Ovary (tissue), 10 donors: ENCODE measurements at regions of chr20 and their contacts with region 1.

Region 1: DNA sequence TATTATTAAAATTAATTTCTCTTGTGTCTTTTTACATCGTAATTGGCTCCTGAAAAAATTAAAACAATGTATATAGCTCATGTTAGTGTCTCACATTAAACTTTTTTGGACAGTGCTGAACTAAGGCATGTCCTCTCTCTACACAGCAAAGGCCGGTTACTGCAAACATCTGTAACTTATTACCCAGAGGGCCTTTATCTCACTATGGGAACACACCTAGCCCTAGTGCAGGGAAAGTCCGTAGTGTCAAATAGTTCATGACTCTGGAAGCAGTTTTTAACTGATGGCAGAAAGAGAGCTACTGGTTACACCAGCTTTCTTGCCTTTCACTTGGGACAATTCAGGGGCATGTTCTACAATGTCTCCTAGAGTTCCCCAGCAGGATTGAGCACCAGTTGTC is 82.2 kb downstream of the PAK5 start:
- DNase-seq: no peak
- H3K4me3 ChIP-seq: no peak overlapping the region
- H3K27ac ChIP-seq: no peak overlapping the region
- H3K4me1 ChIP-seq: no peaks in the 10 kb centered on the region
- H3K27me3 ChIP-seq: no peaks in the 10 kb centered on the region
- CTCF ChIP-seq: no peak
- EP300 ChIP-seq: no peak
- POLR2A ChIP-seq: no peak

Region 2: GRCh38 chr20:9903048-9903655 is 146.5 kb after region 1 on chr20:
- intact Hi-C with region 1: loop called in 1 of 4 experiments (anchors 2 kb)
- DNase-seq: no peak
- H3K4me3 ChIP-seq: no peak overlapping the region
- H3K27ac ChIP-seq: no peak overlapping the region
- H3K4me1 ChIP-seq: no peaks in the 10 kb centered on the region
- H3K27me3 ChIP-seq: no peaks in the 10 kb centered on the region
- CTCF ChIP-seq: no peak
- EP300 ChIP-seq: no peak
- POLR2A ChIP-seq: no peak

Region 3: DNA sequence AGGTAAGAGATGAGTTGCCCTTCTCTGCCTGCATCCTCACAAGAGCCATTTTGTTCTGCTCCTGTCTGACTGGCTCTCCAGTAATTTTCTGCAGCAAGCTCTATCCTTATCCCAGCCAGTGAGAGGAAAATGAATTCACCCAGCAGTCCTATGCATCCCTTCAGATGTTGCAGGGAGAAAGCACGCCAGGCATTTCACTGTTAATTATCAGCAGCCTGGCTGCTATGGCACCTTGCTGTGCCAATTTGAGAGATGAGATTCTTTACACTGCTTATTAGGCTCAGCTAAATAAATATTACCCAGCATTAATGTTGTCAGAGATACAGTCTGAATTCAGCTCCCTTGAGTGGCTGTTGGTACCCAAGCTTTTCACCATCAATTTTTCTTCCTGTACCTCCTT is 400.9 kb after region 1 on chr20:
- intact Hi-C with region 1: no loop called
- DNase-seq: no peak
- H3K4me3 ChIP-seq: no peak overlapping the region
- H3K27ac ChIP-seq: no peak overlapping the region
- H3K4me1 ChIP-seq: no peaks in the 10 kb centered on the region
- H3K27me3 ChIP-seq: no peaks in the 10 kb centered on the region
- CTCF ChIP-seq: no peak
- EP300 ChIP-seq: no peak
- POLR2A ChIP-seq: no peak